GM12878 (cell line): ENCODE measurements at regions of chr15 and their contacts with region 1.

Region 1: GRCh38 chr15:91224755-91225380 is 124.8 kb downstream of the SV2B start:
- DNase-seq: peak; percentile 5
- ATAC-seq: peak; percentile 44; the same call in 2 of the 3 replicates
- H3K4me3 ChIP-seq: no peak overlapping the region
- H3K27ac ChIP-seq: no peak overlapping the region
- H3K4me1 ChIP-seq: no peaks in the 10 kb centered on the region
- H3K27me3 ChIP-seq: no peaks in the 10 kb centered on the region; a peak in 1 of 4 replicates
- CTCF ChIP-seq: peak; percentile 74 to 82 (median 79)
- EP300 ChIP-seq: no peak
- POLR2A ChIP-seq: no peak
- RAD21 ChIP-seq: peak; percentile 89

Region 2: GRCh38 chr15:90336705-90337141 is 888.1 kb before region 1 on chr15:
- CTCF ChIA-PET with region 1: no interaction called
- POLR2A ChIA-PET with region 1: no interaction called
- RAD21 ChIA-PET with region 1: no interaction called
- SMC1A ChIA-PET with region 1: no interaction called
- in situ Hi-C with region 1: loop called (anchors 25 kb)
- intact Hi-C with region 1: no loop called
- DNase-seq: no peak
- ATAC-seq: peak; percentile 49; the same call in 2 of the 3 replicates
- H3K4me3 ChIP-seq: no peak overlapping the region
- H3K27ac ChIP-seq: no peak overlapping the region
- H3K4me1 ChIP-seq: peaks cover 5% of the 10 kb centered on the region; the same call in 1 of the 2 replicates
- H3K27me3 ChIP-seq: no peaks in the 10 kb centered on the region
- CTCF ChIP-seq: no peak
- EP300 ChIP-seq: no peak
- POLR2A ChIP-seq: no peak
- RAD21 ChIP-seq: no peak

Region 3: DNA sequence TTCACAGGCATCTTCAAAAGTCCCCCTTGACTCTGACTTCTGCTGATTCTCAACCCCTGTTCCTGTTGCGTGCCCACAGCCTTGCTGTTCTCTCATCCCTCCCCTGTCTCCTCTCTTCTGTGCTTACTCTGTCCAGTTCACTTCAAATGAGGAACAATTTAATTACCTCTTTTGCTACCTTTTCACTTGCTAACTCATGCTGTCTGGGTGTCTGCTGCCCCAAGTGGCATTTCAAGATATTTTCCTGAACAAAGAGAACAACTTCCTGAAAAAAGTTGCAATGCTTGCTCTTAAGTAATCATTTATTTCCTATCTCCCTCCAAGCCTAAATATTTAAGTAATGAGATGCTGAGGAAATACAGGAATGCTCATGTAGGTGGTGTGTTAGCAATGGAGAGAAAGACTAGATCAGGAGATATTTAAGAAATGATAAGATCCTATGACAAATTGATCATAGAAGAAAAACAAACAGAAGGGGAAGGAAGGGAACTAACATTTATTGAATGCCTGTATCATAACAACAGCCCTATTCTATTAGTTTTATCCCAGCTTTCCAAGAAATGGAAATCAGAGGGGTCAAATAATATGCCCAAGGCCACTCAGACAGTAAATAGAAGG is 82.6 kb before region 1 on chr15:
- CTCF ChIA-PET with region 1: interaction called, 3 read pairs
- POLR2A ChIA-PET with region 1: no interaction called
- RAD21 ChIA-PET with region 1: interaction called, 3 read pairs
- SMC1A ChIA-PET with region 1: no interaction called
- in situ Hi-C with region 1: no loop called
- intact Hi-C with region 1: loop called (anchors 5 kb)
- DNase-seq: no peak
- ATAC-seq: peak; percentile 68
- H3K4me3 ChIP-seq: no peak overlapping the region
- H3K27ac ChIP-seq: no peak overlapping the region
- H3K4me1 ChIP-seq: no peaks in the 10 kb centered on the region
- H3K27me3 ChIP-seq: no peaks in the 10 kb centered on the region
- CTCF ChIP-seq: peak; percentile 49 to 73 (median 61)
- EP300 ChIP-seq: no peak
- POLR2A ChIP-seq: no peak
- RAD21 ChIP-seq: peak; percentile 84

Region 4: GRCh38 chr15:91491101-91491950 is 266.5 kb after region 1 on chr15:
- CTCF ChIA-PET with region 1: no interaction called
- POLR2A ChIA-PET with region 1: no interaction called
- RAD21 ChIA-PET with region 1: no interaction called
- SMC1A ChIA-PET with region 1: no interaction called
- in situ Hi-C with region 1: no loop called
- intact Hi-C with region 1: no loop called
- DNase-seq: no peak
- ATAC-seq: no peak
- H3K4me3 ChIP-seq: no peak overlapping the region
- H3K27ac ChIP-seq: no peak overlapping the region
- H3K4me1 ChIP-seq: no peaks in the 10 kb centered on the region
- H3K27me3 ChIP-seq: no peaks in the 10 kb centered on the region
- CTCF ChIP-seq: no peak
- EP300 ChIP-seq: no peak
- POLR2A ChIP-seq: no peak
- RAD21 ChIP-seq: no peak